Activated CD4-positive, alpha-beta T cell treated with anti-CD3 and anti-CD28 coated beads, Interleukin-2, amount 10 ng/mL, durations not matched to agents 24 days and 14 days (primary cell): ENCODE measurements at regions of chr6 and their contacts with region 1.

Region 1: GRCh38 chr6:43174263-43175112 is 3.4 kb downstream of the SRF start:
- DNase-seq: peak; percentile 99
- H3K4me3 Mint-ChIP-seq: peak overlapping the region; percentile 94
- H3K27ac Mint-ChIP-seq: peak overlapping the region; percentile 84
- H3K4me1 Mint-ChIP-seq: peaks cover 39% of the 10 kb centered on the region
- H3K27me3 Mint-ChIP-seq: no peaks in the 10 kb centered on the region

Region 2: GRCh38 chr6:42453031-42453653 is 721.3 kb before region 1 on chr6:
- intact Hi-C with region 1: loop called (anchors 5 kb)
- DNase-seq: peak; percentile 94
- H3K4me3 Mint-ChIP-seq: peak overlapping the region; percentile 99
- H3K27ac Mint-ChIP-seq: peak overlapping the region; percentile 93
- H3K4me1 Mint-ChIP-seq: peaks cover 35% of the 10 kb centered on the region
- H3K27me3 Mint-ChIP-seq: peaks cover 11% of the 10 kb centered on the region

Region 3: GRCh38 chr6:42831237-42831636 is 343.3 kb before region 1 on chr6:
- intact Hi-C with region 1: no loop called
- DNase-seq: no peak
- H3K4me3 Mint-ChIP-seq: no peak overlapping the region
- H3K27ac Mint-ChIP-seq: no peak overlapping the region
- H3K4me1 Mint-ChIP-seq: no peaks in the 10 kb centered on the region
- H3K27me3 Mint-ChIP-seq: no peaks in the 10 kb centered on the region

Region 4: DNA sequence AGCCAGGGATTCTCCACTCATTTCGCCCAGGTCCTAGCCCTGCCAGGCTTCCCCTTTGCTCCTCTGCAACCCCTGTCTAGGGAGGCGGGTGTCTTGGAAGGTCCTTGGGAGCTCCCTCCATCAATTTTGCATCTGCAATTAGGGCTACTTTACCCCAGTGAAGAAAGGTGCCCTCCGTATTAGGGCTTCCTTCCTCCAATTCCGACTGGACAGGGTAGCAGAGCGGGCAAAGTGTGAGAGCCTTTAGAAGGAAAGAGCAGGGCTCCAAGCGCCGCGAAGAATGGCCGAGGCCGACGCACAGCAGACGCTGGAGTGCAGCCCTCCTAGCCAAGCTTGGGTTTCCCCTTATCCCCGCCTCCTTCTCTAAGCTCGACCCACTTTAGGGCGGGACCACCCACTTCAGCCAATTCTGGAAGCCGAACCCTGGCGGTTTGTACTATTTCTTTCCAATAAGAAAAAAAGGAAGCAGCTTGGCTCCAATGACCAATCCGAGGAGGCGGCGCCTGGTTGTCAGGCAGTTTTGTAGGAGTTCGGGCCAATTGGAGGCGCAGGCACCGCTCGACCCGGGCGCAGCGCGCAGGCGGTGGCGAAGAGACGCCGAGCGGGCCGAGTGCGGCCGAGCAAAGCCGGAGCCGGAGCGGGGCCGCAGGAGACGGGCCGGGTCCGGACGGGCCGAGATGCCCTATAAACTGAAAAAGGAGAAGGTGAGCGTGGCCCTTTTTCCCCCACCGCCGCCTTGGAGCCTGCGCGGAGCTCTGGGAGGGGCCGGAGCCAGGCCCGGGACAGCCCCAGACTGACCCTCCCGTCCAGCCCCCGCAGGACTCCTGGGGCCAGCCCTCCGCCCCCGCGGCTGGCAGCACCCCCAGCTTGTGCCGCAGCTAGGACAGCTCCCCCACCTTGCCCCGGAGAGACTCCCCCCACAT is 190.2 kb before region 1 on chr6 and contains the start of gene PPP2R5D:
- intact Hi-C with region 1: loop called (anchors 2 kb)
- DNase-seq: peak; percentile 99
- H3K4me3 Mint-ChIP-seq: peak within 1 kb of the TSS; percentile 98
- H3K27ac Mint-ChIP-seq: peak within 1 kb of the TSS; percentile 91
- H3K4me1 Mint-ChIP-seq: peaks cover 54% of the 10 kb centered on the region
- H3K27me3 Mint-ChIP-seq: no peaks in the 10 kb centered on the region
- total RNA-seq, gene PPP2R5D: 54.2 and 54.6 TPM in 2 replicates

Region 5: GRCh38 chr6:43113431-43114260 is 60.8 kb before region 1 on chr6:
- intact Hi-C with region 1: no loop called
- DNase-seq: no peak
- H3K4me3 Mint-ChIP-seq: no peak overlapping the region
- H3K27ac Mint-ChIP-seq: no peak overlapping the region
- H3K4me1 Mint-ChIP-seq: no peaks in the 10 kb centered on the region
- H3K27me3 Mint-ChIP-seq: no peaks in the 10 kb centered on the region

Region 6: DNA sequence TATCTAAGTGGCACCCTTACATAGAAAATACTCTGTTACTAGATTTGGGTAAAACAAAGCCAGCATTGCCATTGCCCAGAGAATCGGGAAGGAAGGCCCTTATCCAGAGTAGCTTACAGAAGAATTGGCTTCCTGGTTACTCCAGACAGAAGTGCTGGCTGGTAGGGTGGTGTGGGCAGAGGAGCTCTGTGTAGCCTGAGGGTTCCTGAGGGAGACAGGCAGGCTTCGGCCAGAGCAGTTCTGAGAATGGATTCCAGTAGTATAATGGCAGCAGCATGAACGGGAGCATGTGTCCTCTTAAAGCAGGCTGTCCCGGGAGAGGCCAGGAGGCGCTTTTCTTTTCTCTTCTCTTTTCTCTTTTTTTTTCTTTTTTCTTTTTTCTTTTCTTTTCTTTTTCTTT is 19.5 kb after region 1 on chr6:
- intact Hi-C with region 1: no loop called
- DNase-seq: no peak
- H3K4me3 Mint-ChIP-seq: no peak overlapping the region
- H3K27ac Mint-ChIP-seq: peak overlapping the region; percentile 13
- H3K4me1 Mint-ChIP-seq: peaks cover 5% of the 10 kb centered on the region
- H3K27me3 Mint-ChIP-seq: no peaks in the 10 kb centered on the region

Region 7: GRCh38 chr6:43228951-43229802 is 54.7 kb after region 1 on chr6 and contains the start of gene DNPH1:
- intact Hi-C with region 1: loop called (anchors 2 kb)
- DNase-seq: peak; percentile 96
- H3K4me3 Mint-ChIP-seq: peak within 1 kb of the TSS; percentile 92
- H3K27ac Mint-ChIP-seq: peak within 1 kb of the TSS; percentile 92
- H3K4me1 Mint-ChIP-seq: peaks cover 31% of the 10 kb centered on the region
- H3K27me3 Mint-ChIP-seq: peaks cover 16% of the 10 kb centered on the region
- total RNA-seq, gene DNPH1: 78.9 and 79.6 TPM in 2 replicates

Region 8: GRCh38 chr6:43427406-43428111 is 253.1 kb after region 1 on chr6 and contains the start of gene ABCC10:
- intact Hi-C with region 1: loop called (anchors 5 kb)
- DNase-seq: peak; percentile 98
- H3K4me3 Mint-ChIP-seq: peak within 1 kb of the TSS; percentile 98
- H3K27ac Mint-ChIP-seq: peak within 1 kb of the TSS; percentile 98
- H3K4me1 Mint-ChIP-seq: peaks cover 13% of the 10 kb centered on the region
- H3K27me3 Mint-ChIP-seq: no peaks in the 10 kb centered on the region
- total RNA-seq, gene ABCC10: 38.2 and 40.0 TPM in 2 replicates

Region 9: DNA sequence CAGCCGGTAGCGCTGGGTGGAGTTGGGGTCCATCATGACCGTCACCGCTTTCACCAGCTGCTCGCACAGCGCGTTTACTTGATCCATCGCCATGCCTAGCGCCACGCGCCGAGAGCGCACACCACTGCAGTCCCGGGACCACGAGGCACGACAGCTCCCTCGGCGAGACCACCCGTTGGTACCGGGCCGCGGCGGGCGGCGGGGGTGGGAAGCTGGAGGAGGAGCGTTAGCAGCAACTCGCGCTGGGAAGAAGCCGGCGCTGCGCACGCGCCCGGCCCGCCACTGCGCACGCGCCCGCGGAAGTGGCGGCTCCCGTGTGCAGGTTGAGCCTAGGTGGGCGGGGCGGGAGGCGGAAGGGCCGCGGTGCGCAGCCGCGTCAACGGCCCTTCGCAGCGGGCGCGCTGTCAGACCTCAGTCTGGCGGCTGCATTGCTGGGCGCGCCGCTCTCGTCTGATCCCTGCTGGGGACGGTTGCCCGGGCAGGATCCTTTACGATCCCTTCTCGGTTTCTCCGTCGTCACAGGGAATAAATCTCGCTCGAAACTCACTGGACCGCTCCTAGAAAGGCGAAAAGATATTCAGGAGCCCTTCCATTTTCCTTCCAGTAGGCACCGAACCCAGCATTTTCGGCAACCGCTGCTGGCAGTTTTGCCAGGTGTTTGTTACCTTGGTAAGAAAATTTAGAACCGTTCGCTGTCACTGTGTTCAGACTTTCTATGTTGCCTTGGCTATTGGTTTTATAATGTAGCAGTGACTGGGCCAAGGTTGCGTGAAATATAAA is 401.5 kb after region 1 on chr6 and contains the starts of genes POLH and XPO5:
- intact Hi-C with region 1: loop called (anchors 5 kb)
- DNase-seq: peak; percentile 98
- H3K4me3 Mint-ChIP-seq: peak within 1 kb of the TSS; percentile 95
- H3K27ac Mint-ChIP-seq: peak within 1 kb of the TSS; percentile 90
- H3K4me1 Mint-ChIP-seq: peaks cover 46% of the 10 kb centered on the region
- H3K27me3 Mint-ChIP-seq: no peaks in the 10 kb centered on the region
- total RNA-seq, gene POLH: 34.2 and 37.9 TPM in 2 replicates
- total RNA-seq, gene XPO5: 143 and 145 TPM in 2 replicates